Mammary epithelial cell (primary cell): ENCODE measurements at regions of chr19 and their contacts with region 1.

Region 1: DNA sequence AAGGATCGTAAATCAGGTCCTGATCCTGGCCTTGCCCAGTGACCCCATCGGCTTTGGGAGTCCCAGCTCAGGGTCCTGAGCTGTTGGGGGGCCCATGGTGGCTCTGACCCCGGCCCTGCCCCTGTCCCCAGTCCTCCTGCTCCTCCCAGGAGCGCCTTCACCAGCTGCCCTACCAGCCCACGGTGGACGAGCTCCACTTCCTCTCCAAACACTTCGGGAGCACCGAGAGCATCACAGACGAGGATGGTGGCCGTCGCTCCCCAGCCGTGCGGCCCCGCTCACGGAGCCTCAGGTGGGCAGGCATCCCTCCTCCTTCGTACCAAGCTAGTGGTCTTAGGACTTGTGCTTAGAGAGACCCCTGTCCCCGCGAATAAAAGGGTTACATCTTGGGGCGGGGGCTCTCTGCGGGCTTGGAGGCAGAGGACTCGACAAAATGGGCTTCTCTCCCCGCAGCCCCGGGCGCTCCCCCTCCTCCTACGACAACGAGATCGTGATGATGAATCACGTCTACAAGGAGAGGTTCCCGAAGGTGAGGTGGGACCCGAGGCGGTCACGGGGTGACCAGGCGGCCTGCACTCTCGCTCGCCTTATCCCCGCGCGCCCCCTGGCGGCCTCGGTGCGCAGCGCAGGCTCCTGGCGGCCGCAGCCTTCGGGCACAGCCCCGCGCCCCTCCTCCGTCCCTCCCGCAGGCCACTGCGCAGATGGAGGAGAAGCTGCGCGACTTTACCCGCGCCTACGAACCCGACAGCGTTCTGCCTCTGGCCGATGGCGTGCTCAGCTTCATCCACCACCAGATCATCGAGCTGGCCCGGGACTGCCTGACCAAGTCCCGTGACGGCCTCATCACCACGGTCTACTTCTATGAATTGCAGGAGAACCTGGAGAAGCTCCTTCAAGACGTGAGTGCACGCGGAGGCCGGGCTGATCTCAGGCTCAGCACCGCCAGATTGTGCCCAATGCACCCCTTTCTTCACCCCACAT is 9.1 kb downstream of the MAST1 start:
- DNase-seq: peak; percentile 78
- H3K4me3 ChIP-seq: peak overlapping the region; percentile 1 to 49 (median 34)
- H3K27ac ChIP-seq: no peak overlapping the region
- H3K4me1 ChIP-seq: peaks cover 10% of the 10 kb centered on the region
- H3K27me3 ChIP-seq: no peaks in the 10 kb centered on the region
- CTCF ChIP-seq: peak; percentile 85 to 97

Region 2: GRCh38 chr19:12681074-12681951 is 166.1 kb before region 1 on chr19 and contains the start of gene DHPS:
- CTCF ChIA-PET with region 1: no interaction called
- dilution Hi-C with region 1: no loop called
- in situ Hi-C with region 1: no loop called
- intact Hi-C with region 1: loop called (anchors 1 kb)
- DNase-seq: peak; percentile 97
- H3K4me3 ChIP-seq: peak within 1 kb of the TSS; percentile 81 to 89 (median 83)
- H3K27ac ChIP-seq: peak within 1 kb of the TSS; percentile 95
- H3K4me1 ChIP-seq: no peaks in the 10 kb centered on the region
- H3K27me3 ChIP-seq: no peaks in the 10 kb centered on the region
- CTCF ChIP-seq: no peak
- total RNA-seq, gene DHPS: 46.5 to 73.8 TPM

Region 3: GRCh38 chr19:12757544-12758274 is 89.7 kb before region 1 on chr19:
- CTCF ChIA-PET with region 1: interaction called, 3 read pairs
- dilution Hi-C with region 1: loop called (anchors 5 kb)
- in situ Hi-C with region 1: loop called (anchors 10 kb)
- intact Hi-C with region 1: loop called (anchors 1 kb)
- DNase-seq: peak; percentile 55
- H3K4me3 ChIP-seq: peak overlapping the region in 2 of 3 experiments; percentile 32 to 38
- H3K27ac ChIP-seq: no peak overlapping the region
- H3K4me1 ChIP-seq: peaks cover 7% of the 10 kb centered on the region
- H3K27me3 ChIP-seq: no peaks in the 10 kb centered on the region
- CTCF ChIP-seq: peak; percentile 82 to 92

Region 4: DNA sequence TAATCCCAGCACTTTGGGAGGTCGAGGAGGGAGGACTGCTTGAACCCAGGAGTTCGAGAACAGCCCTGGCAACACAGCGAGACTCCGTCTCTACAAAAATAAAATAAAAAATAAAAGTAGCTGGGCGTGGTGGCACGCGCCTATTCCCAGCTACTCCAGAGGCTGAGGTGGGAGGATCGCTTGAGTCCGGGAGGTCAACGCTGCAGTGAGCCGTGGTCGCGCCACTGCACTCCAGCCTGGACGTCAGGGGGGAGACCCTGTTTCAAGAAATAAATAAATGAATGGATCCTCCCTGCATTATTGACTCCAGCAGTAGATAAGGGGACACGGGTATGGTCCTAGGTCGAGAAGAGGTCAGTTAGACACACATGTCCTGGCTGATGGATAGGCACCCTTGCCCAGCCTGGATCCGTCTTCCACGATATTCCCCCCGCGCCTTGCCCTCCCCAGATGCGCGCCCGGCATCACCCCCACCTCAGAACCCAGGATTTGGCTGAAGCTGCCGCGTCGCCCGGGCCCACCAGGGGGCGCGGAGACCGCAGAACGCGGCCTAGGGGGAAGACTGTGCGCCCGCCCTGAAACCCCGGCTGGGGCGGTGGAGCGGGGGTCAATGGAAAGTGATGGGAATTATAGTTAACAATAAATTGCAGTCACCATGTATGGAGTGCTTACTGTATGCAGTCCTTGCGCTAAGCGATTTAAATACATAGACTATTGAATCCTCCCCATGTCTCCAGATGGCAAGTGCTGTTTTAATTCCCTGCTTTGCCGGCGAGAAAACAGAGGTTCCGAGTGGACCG is 70.0 kb before region 1 on chr19:
- CTCF ChIA-PET with region 1: no interaction called
- dilution Hi-C with region 1: no loop called
- in situ Hi-C with region 1: no loop called
- intact Hi-C with region 1: loop called (anchors 2 kb)
- DNase-seq: peak; percentile 63
- H3K4me3 ChIP-seq: peak overlapping the region; percentile 56 to 73 (median 61)
- H3K27ac ChIP-seq: peak overlapping the region; percentile 77
- H3K4me1 ChIP-seq: peaks cover 47% of the 10 kb centered on the region
- H3K27me3 ChIP-seq: no peaks in the 10 kb centered on the region
- CTCF ChIP-seq: peak; percentile 70 to 96

Region 5: DNA sequence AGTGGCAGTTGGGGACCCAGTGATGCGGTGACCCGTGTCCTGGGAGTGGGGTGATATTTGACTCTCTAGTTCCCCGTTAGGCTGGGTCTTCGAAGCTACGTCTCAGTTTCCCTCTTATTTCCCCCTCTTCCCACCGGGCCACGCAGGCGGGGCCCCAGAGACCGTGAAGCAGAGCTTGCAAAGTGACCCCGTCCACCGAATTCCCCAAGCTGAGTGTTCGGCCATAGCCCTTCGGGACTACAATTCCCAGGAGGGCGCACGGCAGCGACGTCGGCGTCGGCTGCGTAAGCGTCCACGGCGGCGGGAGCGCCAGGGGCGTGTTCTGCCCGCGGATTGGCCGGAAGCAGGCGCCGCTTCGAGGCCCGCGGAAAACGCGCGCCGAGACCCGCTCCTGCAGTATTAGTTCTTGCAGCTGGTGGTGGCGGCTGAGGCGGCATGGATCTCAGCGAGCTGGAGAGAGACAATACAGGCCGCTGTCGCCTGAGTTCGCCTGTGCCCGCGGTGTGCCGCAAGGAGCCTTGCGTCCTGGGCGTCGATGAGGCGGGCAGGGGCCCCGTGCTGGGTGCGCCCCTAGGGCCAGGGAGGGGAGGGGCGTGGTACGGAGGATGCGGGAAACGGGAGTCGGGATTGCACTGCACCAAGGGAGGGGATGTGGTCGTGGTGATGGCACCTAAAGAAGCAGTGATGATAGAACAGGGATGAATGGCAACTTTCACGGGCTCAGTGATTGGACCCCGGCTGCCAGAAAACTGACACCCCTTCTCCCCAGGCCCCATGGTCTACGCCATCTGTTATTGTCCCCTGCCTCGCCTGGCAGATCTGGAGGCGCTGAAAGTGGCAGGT is 41.0 kb before region 1 on chr19 and contains the start of gene RNASEH2A:
- CTCF ChIA-PET with region 1: no interaction called
- dilution Hi-C with region 1: loop called (anchors 5 kb)
- in situ Hi-C with region 1: no loop called
- intact Hi-C with region 1: no loop called
- DNase-seq: peak; percentile 87
- H3K4me3 ChIP-seq: peak within 1 kb of the TSS; percentile 50 to 93 (median 66)
- H3K27ac ChIP-seq: no peak within 1 kb of the TSS
- H3K4me1 ChIP-seq: peaks cover 16% of the 10 kb centered on the region
- H3K27me3 ChIP-seq: no peaks in the 10 kb centered on the region
- CTCF ChIP-seq: no peak
- total RNA-seq, gene RNASEH2A: 7.0 to 27.8 TPM